Caco-2 (cell line): ENCODE measurements at regions of chr6 and their contacts with region 1.

Region 1: GRCh38 chr6:81562169-81562568 is 190.3 kb downstream of the TENT5A start:
- DNase-seq: peak; percentile 60 to 64
- H3K4me3 ChIP-seq: no peak overlapping the region
- H3K4me3 Mint-ChIP-seq: peak overlapping the region; percentile 59
- H3K27ac Mint-ChIP-seq: peak overlapping the region; percentile 51
- H3K4me1 ChIP-seq: peaks cover 57% of the 10 kb centered on the region
- H3K4me1 Mint-ChIP-seq: peaks cover 8% of the 10 kb centered on the region
- H3K27me3 ChIP-seq: no peaks in the 10 kb centered on the region
- H3K27me3 Mint-ChIP-seq: no peaks in the 10 kb centered on the region
- CTCF ChIP-seq: no peak

Region 2: GRCh38 chr6:81487489-81487888 is 74.7 kb before region 1 on chr6:
- CTCF ChIA-PET with region 1: no interaction called
- POLR2A ChIA-PET with region 1: no interaction called
- intact Hi-C with region 1: loop called (anchors 1 kb)
- DNase-seq: no peak
- H3K4me3 ChIP-seq: no peak overlapping the region
- H3K4me3 Mint-ChIP-seq: no peak overlapping the region
- H3K27ac Mint-ChIP-seq: no peak overlapping the region
- H3K4me1 ChIP-seq: peaks cover 26% of the 10 kb centered on the region
- H3K4me1 Mint-ChIP-seq: peaks cover 28% of the 10 kb centered on the region
- H3K27me3 ChIP-seq: no peaks in the 10 kb centered on the region
- H3K27me3 Mint-ChIP-seq: no peaks in the 10 kb centered on the region
- CTCF ChIP-seq: no peak

Region 3: GRCh38 chr6:81614292-81614691 is 52.1 kb after region 1 on chr6:
- CTCF ChIA-PET with region 1: no interaction called
- POLR2A ChIA-PET with region 1: interaction called, 4 read pairs
- intact Hi-C with region 1: loop called (anchors 2 kb)
- DNase-seq: peak; percentile 67 to 72
- H3K4me3 ChIP-seq: no peak overlapping the region
- H3K4me3 Mint-ChIP-seq: peak overlapping the region; percentile 20
- H3K27ac Mint-ChIP-seq: peak overlapping the region; percentile 65
- H3K4me1 ChIP-seq: peaks cover 29% of the 10 kb centered on the region
- H3K4me1 Mint-ChIP-seq: peaks cover 22% of the 10 kb centered on the region
- H3K27me3 ChIP-seq: no peaks in the 10 kb centered on the region
- H3K27me3 Mint-ChIP-seq: no peaks in the 10 kb centered on the region
- CTCF ChIP-seq: no peak

Region 4: DNA sequence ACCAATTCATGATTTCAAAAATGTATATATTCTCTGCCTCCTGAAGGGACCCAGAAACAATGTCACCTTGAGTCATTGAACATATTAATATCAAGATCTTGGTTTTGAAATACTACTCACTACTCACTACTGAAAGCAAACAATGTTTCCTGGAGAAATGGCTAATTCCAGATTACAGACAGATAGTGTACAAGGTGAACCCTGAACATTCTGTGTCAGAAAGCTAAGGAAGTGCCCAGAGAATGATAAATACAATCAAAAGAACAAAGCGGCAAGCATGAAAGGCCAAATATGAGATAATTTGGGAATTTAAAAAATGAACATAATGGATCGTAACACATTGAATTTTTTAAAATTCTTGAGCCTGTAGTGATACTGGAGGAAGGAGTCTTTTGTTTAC is 291.8 kb after region 1 on chr6:
- CTCF ChIA-PET with region 1: no interaction called
- POLR2A ChIA-PET with region 1: no interaction called
- intact Hi-C with region 1: loop called (anchors 5 kb)
- DNase-seq: peak in 1 of 2 experiments; percentile 63
- H3K4me3 ChIP-seq: no peak overlapping the region
- H3K4me3 Mint-ChIP-seq: peak overlapping the region; percentile 58
- H3K27ac Mint-ChIP-seq: peak overlapping the region; percentile 87
- H3K4me1 ChIP-seq: peaks cover 51% of the 10 kb centered on the region
- H3K4me1 Mint-ChIP-seq: peaks cover 37% of the 10 kb centered on the region
- H3K27me3 ChIP-seq: no peaks in the 10 kb centered on the region
- H3K27me3 Mint-ChIP-seq: no peaks in the 10 kb centered on the region
- CTCF ChIP-seq: no peak

Region 5: DNA sequence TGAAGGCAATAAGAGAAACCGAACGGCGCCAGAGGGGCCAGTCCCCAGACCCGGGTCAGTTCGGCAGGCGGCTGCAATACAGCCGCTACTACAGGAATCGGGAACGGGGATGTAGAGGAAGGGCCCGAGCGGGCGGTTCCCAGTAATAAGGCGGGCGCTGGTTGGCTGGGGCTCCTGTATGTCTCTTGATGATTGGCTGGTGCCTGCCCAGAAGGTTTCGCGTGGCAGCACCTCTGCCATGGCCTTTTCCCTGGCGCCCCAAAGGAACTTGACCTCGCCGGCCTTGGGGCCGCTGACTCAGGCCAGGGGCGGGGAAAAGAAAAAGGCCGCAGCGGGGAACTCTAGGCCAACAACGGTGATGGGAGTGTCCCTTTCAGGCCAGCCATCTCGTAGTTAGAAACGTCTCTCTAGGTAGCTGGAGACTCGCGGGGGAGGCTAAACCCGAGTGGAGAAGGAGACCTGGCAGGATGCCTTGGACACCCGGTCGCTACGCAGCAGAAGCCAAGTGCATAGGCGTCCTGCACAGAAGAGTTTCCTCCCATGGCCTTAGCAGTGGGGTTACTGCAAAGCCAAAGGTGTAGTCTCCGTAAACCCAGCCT is 685.6 kb after region 1 on chr6 and contains the start of gene IBTK:
- CTCF ChIA-PET with region 1: no interaction called
- POLR2A ChIA-PET with region 1: no interaction called
- intact Hi-C with region 1: loop called (anchors 5 kb)
- DNase-seq: peak; percentile 95 to 97
- H3K4me3 ChIP-seq: peak within 1 kb of the TSS; percentile 74
- H3K4me3 Mint-ChIP-seq: peak within 1 kb of the TSS; percentile 90
- H3K27ac Mint-ChIP-seq: peak within 1 kb of the TSS; percentile 96
- H3K4me1 ChIP-seq: peaks cover 28% of the 10 kb centered on the region
- H3K4me1 Mint-ChIP-seq: peaks cover 20% of the 10 kb centered on the region
- H3K27me3 ChIP-seq: no peaks in the 10 kb centered on the region
- H3K27me3 Mint-ChIP-seq: no peaks in the 10 kb centered on the region
- CTCF ChIP-seq: no peak
- total RNA-seq, gene IBTK: 29.4 and 30.3 TPM in 2 replicates